Testis (tissue), 5 donors: ENCODE measurements at regions of chr4 and their contacts with region 1.

Region 1: DNA sequence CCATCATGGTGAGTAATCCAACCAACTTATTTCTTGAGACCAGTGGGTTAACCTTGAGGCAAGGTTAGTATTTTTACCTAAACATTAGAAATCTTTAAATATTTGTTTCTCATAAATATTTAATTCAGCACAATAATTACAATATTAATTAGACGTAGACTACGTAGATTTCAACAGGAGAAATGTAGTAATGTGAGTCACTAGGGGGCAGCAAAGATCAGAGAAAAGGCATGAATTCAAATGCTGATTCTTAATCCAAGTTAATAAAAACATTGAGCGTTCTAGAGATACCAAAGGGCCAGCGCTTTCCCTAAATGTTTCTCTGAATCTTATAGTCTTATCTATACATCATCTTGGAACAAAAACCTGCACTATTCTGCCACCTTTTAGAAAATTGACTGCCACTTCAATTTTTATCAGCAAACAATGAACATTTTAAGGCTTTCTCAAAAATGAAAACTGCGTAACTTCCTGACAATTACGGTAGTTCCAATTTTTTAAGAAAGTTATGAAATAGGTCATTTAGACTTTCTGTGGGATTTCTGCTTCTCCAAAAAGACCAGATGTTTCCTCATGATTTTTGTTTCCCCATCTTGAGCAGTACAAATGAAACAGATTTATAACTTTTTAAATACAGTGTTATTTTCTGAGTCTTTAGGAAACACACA is 180.7 kb downstream of the GASK1B start:
- DNase-seq: peak; percentile 76
- H3K4me3 ChIP-seq: peak overlapping the region in 1 of 2 donors; percentile 20
- H3K27ac ChIP-seq: peak overlapping the region; percentile 44 to 75
- H3K4me1 ChIP-seq: peaks cover 9% of the 10 kb centered on the region
- H3K27me3 ChIP-seq: no peaks in the 10 kb centered on the region
- CTCF ChIP-seq: peak; percentile 63 to 83 (median 74)
- POLR2A ChIP-seq: no peak

Region 2: DNA sequence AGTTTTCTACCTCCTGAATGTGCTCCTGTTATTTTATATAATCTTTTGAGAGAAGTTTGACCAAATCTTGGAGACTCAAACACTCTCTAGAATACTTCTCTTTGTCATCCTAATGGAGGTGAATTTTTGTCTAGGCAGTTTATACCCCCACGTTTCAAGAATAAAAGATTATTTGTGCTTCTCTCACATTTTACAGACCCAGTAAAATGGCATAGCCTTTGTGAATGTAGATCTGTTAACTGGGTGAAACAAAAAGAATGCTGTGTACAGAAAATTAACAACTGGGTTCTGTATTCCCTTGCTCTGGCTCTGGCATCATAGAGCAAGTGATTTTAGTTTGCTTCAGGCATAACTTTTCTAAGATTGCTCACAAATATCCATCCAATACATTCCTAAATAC is 154.6 kb after region 1 on chr4:
- intact Hi-C with region 1: no loop called
- DNase-seq: no peak
- H3K4me3 ChIP-seq: no peak overlapping the region
- H3K27ac ChIP-seq: no peak overlapping the region
- H3K4me1 ChIP-seq: peaks cover 4% of the 10 kb centered on the region
- H3K27me3 ChIP-seq: no peaks in the 10 kb centered on the region
- CTCF ChIP-seq: no peak
- POLR2A ChIP-seq: no peak

Region 3: DNA sequence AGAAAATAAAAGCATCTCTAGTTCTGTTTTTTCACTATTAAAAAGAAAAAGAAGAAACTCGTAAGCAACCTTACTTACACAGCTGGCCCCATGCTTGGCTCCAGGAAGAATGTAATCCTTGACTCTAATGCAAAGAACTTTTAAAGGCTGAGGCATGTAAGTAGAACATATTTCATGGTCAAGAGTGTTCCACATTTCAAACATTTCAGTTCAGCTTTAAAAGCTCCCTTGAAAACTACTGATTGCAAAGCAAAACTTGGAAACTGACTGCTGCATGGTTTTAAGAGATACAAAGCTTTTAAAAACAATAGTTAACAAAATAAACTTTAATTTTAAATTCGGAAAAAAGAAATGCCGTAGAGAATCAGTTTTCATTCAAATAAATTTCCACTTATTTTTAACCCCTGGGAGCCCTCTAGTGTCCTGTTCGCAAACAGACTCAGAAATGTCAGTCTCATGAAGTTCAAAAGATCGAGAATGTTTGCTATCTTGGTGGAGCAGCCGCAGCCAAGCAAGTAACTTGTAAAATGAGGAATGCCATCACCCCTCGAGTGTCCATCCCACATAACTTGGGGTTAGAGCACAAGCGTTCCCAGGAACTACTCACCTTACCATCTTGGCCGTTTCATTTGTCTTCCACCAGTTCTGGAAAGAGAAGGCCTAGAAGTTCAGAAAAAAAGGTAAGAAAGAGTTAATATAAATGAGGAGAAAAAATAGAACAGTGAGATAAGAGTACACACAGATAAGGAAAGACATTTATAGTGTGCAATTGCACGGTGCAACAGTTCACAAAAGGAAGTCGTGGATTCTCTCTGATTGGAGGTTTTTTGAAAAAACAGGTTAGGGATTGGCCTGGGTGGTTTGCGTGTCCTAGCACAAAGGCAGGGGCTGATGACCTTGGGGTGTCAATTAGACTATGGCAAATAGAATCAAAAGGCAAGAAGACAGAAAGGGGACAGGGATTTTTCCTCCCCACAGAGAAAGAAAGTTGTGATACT is 180.4 kb after region 1 on chr4 and contains the start of gene GASK1B:
- intact Hi-C with region 1: loop called (anchors 5 kb)
- DNase-seq: peak; percentile 74
- H3K4me3 ChIP-seq: peak within 1 kb of the TSS; percentile 53 to 71
- H3K27ac ChIP-seq: peak within 1 kb of the TSS; percentile 82 to 84
- H3K4me1 ChIP-seq: no peaks in the 10 kb centered on the region
- H3K27me3 ChIP-seq: no peaks in the 10 kb centered on the region
- CTCF ChIP-seq: peak; percentile 57 to 63 (median 62)
- POLR2A ChIP-seq: no peak
- total RNA-seq, gene GASK1B: 19.8 to 24.0 TPM